Panc1 (cell line): ENCODE measurements at regions of chr21 and their contacts with region 1.

Region 1: DNA sequence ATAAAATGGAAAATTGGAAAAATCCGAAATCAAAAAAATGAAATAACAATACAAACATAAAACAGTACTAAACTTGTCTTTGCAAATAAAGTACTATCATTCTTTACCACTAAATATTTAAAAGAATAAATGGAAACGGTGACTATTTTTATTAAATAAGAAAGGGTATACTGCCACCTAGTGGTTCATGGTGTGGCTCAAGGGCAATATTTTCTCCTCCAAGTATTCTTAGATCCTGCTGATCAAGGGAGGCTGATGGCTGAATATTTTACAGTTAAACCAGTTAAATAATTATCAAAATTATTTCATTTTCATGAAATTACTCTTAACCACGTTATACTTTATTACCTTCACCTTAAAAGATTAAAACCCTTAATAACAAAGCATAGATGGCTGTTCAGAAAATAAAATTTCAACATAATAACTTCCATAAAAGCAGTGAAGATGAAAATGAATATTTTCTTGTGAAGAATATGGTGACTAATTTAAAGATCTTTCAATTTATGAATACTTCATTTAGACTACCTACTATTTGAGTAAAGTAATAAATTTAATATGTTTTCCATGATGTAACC is 1793.9 kb downstream of the NCAM2 start:
- DNase-seq: peak; percentile 24
- ATAC-seq: no peak
- H3K4me3 ChIP-seq: no peak overlapping the region
- H3K27ac ChIP-seq: no peak overlapping the region
- H3K4me1 ChIP-seq: no peaks in the 10 kb centered on the region
- H3K27me3 ChIP-seq: no peaks in the 10 kb centered on the region
- CTCF ChIP-seq: peak; percentile 51; the same call in 1 of the 2 replicates

Region 2: DNA sequence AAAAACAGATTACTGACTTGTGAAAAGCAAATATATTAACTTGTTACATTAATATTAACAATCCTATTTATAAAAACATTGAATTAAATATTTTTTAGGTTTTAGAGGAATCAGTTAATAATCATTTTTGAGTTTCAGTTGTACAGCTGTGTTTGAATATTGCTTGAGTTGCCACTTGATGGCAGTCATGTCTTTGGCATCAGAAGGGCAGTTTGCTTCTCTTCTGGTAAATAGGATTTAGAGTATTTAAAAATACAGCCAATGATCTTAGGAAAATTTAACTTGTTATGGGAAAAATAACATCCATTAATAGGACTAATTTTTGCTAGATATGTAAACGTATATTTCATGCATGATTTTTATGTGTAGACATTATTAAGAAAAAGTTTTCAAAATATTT is 1559.8 kb before region 1 on chr21:
- CTCF ChIA-PET with region 1: no interaction called
- POLR2A ChIA-PET with region 1: no interaction called
- in situ Hi-C with region 1: no loop called
- intact Hi-C with region 1: loop called (anchors 10 kb)
- DNase-seq: peak; percentile 2
- ATAC-seq: no peak
- H3K4me3 ChIP-seq: no peak overlapping the region
- H3K27ac ChIP-seq: no peak overlapping the region
- H3K4me1 ChIP-seq: no peaks in the 10 kb centered on the region
- H3K27me3 ChIP-seq: no peaks in the 10 kb centered on the region
- CTCF ChIP-seq: peak; percentile 40; the same call in 1 of the 2 replicates

Region 3: GRCh38 chr21:22209304-22209700 is 582.8 kb before region 1 on chr21:
- CTCF ChIA-PET with region 1: interaction called, 12 read pairs
- POLR2A ChIA-PET with region 1: no interaction called
- in situ Hi-C with region 1: no loop called
- intact Hi-C with region 1: no loop called
- DNase-seq: no peak
- ATAC-seq: no peak
- H3K4me3 ChIP-seq: no peak overlapping the region
- H3K27ac ChIP-seq: no peak overlapping the region
- H3K4me1 ChIP-seq: no peaks in the 10 kb centered on the region
- H3K27me3 ChIP-seq: no peaks in the 10 kb centered on the region
- CTCF ChIP-seq: no peak

Region 4: GRCh38 chr21:22399738-22400514 is 392.1 kb before region 1 on chr21:
- CTCF ChIA-PET with region 1: no interaction called
- POLR2A ChIA-PET with region 1: no interaction called
- in situ Hi-C with region 1: no loop called
- intact Hi-C with region 1: no loop called
- DNase-seq: no peak
- ATAC-seq: no peak
- H3K4me3 ChIP-seq: no peak overlapping the region
- H3K27ac ChIP-seq: no peak overlapping the region
- H3K4me1 ChIP-seq: no peaks in the 10 kb centered on the region
- H3K27me3 ChIP-seq: no peaks in the 10 kb centered on the region
- CTCF ChIP-seq: no peak

Region 5: DNA sequence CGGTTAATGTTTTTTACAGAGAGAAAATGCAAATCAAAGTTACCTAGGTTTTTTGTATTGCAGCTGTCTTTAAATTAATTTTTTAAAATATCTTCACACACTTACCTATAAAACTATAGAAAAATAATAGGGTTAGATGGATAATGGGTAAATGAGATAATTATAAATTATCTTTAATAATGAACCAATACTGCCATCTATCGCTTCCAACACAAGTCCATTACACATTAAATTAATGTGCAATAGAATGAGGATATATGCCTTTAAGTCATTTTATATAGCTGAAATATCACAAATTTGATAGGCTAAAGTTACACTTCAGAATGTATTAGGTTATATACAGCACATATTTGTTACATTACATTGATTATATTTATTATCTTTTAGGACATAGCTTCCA is 602.4 kb after region 1 on chr21:
- CTCF ChIA-PET with region 1: no interaction called
- POLR2A ChIA-PET with region 1: no interaction called
- in situ Hi-C with region 1: no loop called
- intact Hi-C with region 1: loop called (anchors 10 kb)
- DNase-seq: no peak
- ATAC-seq: no peak
- H3K4me3 ChIP-seq: no peak overlapping the region
- H3K27ac ChIP-seq: no peak overlapping the region
- H3K4me1 ChIP-seq: no peaks in the 10 kb centered on the region
- H3K27me3 ChIP-seq: no peaks in the 10 kb centered on the region
- CTCF ChIP-seq: no peak